Right ventricle myocardium inferior (tissue), 1 donor: ENCODE measurements at regions of chr4 and their contacts with region 1.

Region 1: DNA sequence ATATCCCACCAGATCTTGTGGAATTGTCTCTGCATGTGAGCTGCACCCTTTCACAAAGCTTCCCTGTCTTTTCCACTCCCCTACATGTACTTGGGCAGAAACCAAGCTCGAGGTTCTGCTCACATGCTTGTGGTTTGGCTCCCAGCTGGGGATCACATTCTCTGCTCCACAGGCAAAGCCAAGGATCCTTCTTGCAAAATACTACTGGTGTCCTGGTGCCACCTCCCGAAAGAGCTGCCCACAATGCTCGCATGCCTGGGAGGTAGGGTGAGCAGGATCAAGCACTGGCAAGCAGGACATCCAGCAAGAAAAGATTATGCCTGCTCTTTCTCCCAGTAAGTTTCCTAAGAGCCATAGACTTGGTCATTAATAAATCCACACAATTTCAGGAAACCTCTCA is 45.1 kb upstream of the PPARGC1A start:
- DNase-seq: peak; percentile 61
- ATAC-seq: peak; percentile 74

Region 2: GRCh38 chr4:23455456-23456158 is 479.3 kb before region 1 on chr4:
- intact Hi-C with region 1: loop called (anchors 10 kb)
- DNase-seq: no peak
- ATAC-seq: peak; percentile 75

Region 3: GRCh38 chr4:23835774-23836478 is 99.0 kb before region 1 on chr4:
- intact Hi-C with region 1: no loop called
- DNase-seq: no peak
- ATAC-seq: no peak

Region 4: DNA sequence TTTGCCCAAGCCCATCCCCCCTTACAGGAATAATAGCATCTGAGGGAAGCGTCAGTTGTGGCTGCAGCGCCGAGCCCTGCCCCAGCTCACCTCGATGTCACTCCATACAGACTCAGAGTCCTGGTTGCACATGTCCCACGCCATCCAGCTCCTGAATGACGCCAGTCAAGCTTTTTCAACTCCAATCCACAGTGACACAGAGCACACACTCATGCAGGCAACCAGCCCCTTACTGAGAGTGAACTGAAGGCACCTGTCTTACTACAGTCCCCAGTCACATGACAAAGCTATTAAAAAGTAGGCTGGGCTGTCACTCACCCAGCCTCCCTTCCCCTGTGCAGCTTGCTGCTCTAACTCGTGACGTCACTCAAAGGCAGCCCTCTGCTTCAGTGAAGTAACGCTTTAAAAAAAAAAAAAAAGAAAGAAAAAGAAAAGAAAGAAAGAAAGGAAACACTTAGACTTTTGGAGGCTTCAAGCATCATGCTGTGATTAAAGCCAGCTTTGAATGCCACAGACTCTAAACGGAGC is 45.0 kb before region 1 on chr4 and contains the start of gene PPARGC1A:
- intact Hi-C with region 1: loop called (anchors 1 kb)
- DNase-seq: peak; percentile 55
- ATAC-seq: peak; percentile 92
- total RNA-seq, gene PPARGC1A: 77.5 TPM

Region 5: DNA sequence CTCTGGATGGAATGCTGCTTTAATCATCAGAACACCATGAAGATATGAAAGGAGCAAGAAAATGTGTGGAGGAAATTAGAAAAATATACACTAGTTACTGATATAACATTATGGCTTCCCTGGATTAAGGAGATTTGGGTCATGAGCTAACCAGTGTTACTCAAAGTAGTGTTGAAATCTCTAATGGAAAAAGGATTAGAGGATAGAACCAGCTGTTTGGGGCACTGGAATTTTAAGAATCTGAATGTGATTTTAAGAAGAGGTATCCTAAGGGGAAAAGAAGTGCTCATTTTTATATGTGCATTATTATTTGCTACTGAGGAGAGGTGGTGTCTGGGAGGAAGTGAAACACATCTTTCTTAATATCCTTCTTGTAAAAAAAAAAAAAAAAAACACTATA is 119.0 kb after region 1 on chr4:
- intact Hi-C with region 1: no loop called
- DNase-seq: no peak
- ATAC-seq: no peak

Region 6: GRCh38 chr4:24190936-24191695 is 256.2 kb after region 1 on chr4:
- intact Hi-C with region 1: no loop called
- DNase-seq: no peak
- ATAC-seq: no peak

Region 7: DNA sequence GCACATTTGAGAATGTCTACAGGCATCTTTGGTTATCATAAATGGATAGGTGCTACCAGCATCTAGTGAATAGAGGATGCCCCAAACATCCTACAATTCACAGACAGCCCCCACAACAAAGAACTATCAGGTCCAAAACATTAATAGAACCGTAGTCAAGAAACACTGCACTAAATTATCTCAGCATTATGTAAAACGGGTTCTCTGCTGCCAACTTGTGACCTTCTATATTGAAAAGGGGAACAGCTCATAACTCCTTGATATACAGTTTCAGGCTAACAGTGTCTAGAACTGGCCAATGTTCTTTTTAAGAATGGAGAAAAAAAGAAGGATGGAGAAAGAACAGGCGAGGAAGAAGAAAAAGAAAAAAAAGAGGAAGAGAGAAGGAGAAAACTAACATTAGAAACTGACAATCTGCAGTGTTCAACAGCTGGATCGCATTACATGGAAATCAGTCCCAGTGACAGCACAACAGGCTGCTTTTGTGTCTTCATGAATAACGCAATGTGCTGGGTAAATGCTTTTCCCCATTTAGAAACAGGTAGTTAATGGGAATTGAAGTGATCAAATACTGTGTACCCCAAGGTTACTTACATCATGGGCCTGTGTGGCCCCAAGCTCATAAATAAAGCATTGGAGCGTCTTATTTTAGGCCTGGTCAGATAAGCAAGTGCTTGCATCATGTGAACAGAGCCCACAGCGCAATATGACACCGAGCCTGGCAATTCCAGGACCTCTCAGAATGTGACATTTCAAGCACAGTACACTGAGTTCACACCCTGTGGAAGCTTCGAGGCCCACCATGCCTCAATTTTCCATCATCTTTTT is 310.0 kb after region 1 on chr4:
- intact Hi-C with region 1: loop called (anchors 1 kb)
- DNase-seq: peak; percentile 77
- ATAC-seq: peak; percentile 94